ENCODE measurements at regions of chr7 and their contacts with region 1.

Region 1: DNA sequence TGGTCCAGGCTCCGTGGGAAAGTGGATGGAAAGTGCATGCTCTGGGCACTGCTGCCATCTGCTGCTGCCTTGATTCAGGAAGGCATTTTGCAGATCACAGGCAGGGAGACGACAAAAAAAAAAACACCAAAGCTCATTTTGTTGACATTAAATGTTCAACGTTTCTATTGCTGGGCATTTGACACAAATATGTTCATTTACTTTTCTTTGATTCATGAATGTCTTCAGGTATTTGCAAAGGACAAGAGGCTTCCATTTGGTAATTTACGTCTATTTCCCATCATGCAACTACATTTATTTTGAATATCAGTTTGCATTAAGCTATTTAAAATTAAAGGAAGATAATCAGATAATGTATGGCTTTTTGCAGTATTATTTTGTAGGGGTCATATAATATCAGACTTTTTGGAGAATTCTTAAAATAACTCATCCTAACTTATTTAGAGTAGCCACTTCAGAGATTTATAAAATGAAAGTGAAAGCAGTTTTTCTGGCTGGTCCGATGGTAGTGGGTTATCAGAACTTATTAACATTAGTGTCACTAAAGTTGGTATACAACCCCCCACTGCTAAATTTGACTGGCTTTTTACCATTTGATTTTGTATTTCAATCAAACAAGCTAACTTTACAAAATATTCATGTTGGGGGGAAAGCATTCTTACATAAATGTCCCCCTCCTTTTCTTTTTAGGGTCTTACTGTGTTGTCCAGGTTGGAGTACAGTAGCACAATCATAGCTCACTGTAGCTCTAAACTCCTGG is 65.3 kb downstream of the PDIA4 start:
- DNase-seq: peak; percentile 68
- H3K4me3 ChIP-seq: peak overlapping the region; percentile 62
- H3K27ac ChIP-seq: peak overlapping the region; percentile 21
- H3K4me1 ChIP-seq: no peaks in the 10 kb centered on the region
- H3K27me3 ChIP-seq: no peaks in the 10 kb centered on the region
- CTCF ChIP-seq: peak; percentile 77

Region 2: GRCh38 chr7:148264933-148265557 is 698.0 kb before region 1 on chr7:
- intact Hi-C with region 1: loop called (anchors 5 kb)
- DNase-seq: no peak
- H3K4me3 ChIP-seq: no peak overlapping the region
- H3K27ac ChIP-seq: no peak overlapping the region
- H3K4me1 ChIP-seq: no peaks in the 10 kb centered on the region
- H3K27me3 ChIP-seq: no peaks in the 10 kb centered on the region
- CTCF ChIP-seq: peak; percentile 66

Region 3: GRCh38 chr7:148503875-148504487 is 459.0 kb before region 1 on chr7:
- intact Hi-C with region 1: loop called (anchors 5 kb)
- DNase-seq: no peak
- H3K4me3 ChIP-seq: no peak overlapping the region
- H3K27ac ChIP-seq: no peak overlapping the region
- H3K4me1 ChIP-seq: no peaks in the 10 kb centered on the region
- H3K27me3 ChIP-seq: no peaks in the 10 kb centered on the region
- CTCF ChIP-seq: peak; percentile 77

Region 4: GRCh38 chr7:148575640-148576411 is 387.2 kb before region 1 on chr7:
- intact Hi-C with region 1: loop called (anchors 5 kb)
- DNase-seq: peak; percentile 69
- H3K4me3 ChIP-seq: no peak overlapping the region
- H3K27ac ChIP-seq: no peak overlapping the region
- H3K4me1 ChIP-seq: no peaks in the 10 kb centered on the region
- H3K27me3 ChIP-seq: no peaks in the 10 kb centered on the region
- CTCF ChIP-seq: peak; percentile 84

Region 5: GRCh38 chr7:148856891-148857290 is 106.1 kb before region 1 on chr7:
- intact Hi-C with region 1: loop called (anchors 10 kb)
- DNase-seq: no peak
- H3K4me3 ChIP-seq: no peak overlapping the region
- H3K27ac ChIP-seq: no peak overlapping the region
- H3K4me1 ChIP-seq: no peaks in the 10 kb centered on the region
- H3K27me3 ChIP-seq: no peaks in the 10 kb centered on the region
- CTCF ChIP-seq: no peak

Region 6: DNA sequence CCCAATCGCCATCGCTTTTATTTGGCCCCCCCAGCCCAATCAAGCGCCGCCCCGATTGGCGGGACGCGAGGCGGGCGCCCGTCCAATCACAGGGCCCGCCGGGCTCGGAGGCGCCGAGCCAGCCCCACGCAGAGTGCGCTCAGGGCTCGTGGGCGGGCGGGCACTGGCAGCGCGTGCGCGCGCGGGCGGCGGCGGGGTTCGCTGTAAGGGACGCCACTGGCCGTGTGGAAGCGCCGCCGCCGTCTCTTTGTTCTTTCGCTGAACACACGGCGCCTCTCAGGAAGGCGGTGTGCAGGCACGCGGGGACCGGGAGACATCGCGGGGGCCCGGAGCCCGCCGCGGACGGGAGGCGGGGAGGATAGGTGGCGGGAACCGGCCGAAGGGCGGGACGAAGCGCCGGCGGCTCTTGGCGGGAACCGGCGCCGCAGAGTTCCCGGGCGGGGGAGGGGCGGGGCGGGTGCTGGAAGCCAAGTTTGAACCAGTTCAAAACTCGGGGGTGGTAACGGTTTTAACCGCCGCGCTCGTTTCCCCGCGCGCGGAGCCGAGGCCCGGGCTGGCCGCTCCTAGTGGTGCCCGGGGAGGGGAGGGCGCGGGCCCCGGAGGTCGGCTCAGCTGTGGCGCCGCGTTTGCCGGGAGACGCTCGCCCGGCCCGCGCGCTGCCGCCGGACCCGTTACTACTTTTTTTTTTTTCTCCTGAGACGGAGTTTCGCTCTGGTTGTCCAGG is 78.5 kb before region 1 on chr7:
- intact Hi-C with region 1: loop called (anchors 5 kb)
- DNase-seq: peak; percentile 92
- H3K4me3 ChIP-seq: peak overlapping the region; percentile 72
- H3K27ac ChIP-seq: peak overlapping the region; percentile 85
- H3K4me1 ChIP-seq: peaks cover 5% of the 10 kb centered on the region
- H3K27me3 ChIP-seq: no peaks in the 10 kb centered on the region
- CTCF ChIP-seq: no peak

Measured in colonic mucosa (tissue), 4 donors.